ENCODE measurements at regions of chr16 and their contacts with region 1.

Region 1: DNA sequence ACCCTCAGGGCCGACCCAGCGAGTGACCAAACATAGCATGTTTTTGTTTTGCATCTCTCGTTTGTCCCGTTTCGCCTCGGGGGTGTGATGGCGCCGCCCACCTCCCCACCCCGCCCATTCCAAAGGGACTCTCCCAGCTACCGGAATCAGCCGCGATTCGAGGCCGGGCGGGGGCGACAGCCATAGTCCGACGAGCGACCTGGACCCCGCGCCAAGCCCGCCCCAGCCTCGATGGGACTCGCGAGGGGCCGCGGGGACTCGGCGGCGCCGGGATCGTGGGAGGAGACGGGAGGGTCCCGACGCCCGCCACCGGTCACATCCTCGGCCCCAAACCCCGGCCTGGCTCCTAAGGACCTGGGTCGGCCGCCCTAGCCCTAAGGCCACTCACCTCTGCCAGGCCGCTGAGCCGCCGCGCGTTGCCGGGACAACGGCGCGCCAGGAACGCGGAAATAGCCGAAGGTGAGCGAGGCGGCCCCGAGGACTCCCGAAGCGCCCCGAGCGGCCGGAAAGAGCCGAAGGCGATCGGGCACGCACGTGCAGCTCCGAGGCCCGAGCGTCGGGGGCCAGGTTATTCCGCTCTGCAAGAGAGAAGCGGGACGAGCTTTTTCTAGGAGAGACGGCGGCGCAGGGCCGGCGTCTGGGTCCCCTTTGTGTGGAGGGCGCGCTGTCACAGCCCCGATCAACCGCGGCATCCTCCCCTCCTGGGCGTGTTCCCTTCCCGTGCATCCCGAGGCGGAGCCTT is 1.4 kb downstream of the IFT140 start:
- DNase-seq: peak; percentile 76 to 81
- ATAC-seq: peak; percentile 61 to 67
- H3K4me3 ChIP-seq: peak overlapping the region; percentile 69 to 91 (median 80)
- H3K27ac ChIP-seq: peak overlapping the region; percentile 78 to 94 (median 86)
- H3K4me1 ChIP-seq: peaks cover 30 to 33% of the 10 kb centered on the region in 2 donors
- H3K27me3 ChIP-seq: no peaks in the 10 kb centered on the region
- CTCF ChIP-seq: no peak
- POLR2A ChIP-seq: no peak

Region 2: DNA sequence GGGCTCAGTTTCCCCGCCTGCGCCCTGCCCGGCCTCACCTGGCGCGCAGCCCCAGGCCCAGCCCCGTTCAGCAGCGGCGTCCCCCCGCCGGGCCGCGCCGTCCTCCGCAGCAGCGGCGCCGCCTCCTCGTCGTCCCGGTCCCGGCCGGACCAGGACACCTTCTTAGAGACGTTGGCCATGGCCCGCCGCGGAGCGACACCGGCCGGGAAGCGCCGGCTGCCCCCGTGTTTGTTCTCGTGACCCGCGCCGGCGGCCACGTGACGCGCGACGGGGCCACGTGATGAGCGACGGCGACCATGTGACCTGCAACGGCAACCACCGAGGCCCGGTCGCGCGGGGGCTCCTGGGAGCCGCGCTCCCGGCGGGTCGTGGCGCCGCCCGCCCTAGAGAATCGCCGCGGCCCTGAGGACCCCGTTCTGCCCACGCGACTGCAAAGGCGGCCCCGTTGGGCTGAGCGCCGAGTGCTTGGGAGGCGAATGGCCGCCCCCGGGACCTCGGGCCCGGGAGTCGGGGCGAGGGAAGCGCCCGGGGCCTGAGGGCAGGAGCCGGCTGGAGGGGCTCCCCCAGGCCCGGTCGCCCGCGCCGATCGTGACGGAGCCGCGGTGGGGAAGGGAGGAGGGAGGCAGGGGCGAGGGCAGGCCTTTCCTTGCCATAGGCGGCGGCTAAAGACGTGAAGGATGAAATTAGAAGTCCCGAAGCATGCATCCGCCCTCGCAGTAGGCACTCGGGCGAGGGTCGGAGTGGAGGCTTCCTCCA is 135.5 kb before region 1 on chr16 and contains the start of gene CLCN7:
- in situ Hi-C with region 1: no loop called
- intact Hi-C with region 1: loop called (anchors 5 kb)
- DNase-seq: peak; percentile 86 to 91
- ATAC-seq: peak; percentile 93 to 97
- H3K4me3 ChIP-seq: peak within 1 kb of the TSS; percentile 80 to 100 (median 86)
- H3K27ac ChIP-seq: peak within 1 kb of the TSS; percentile 90 to 98 (median 94)
- H3K4me1 ChIP-seq: peaks cover 14 to 27% of the 10 kb centered on the region in 2 donors
- H3K27me3 ChIP-seq: no peaks in the 10 kb centered on the region
- CTCF ChIP-seq: peak in 2 of 5 experiments; percentile 21 to 56
- POLR2A ChIP-seq: peak; percentile 95 to 97
- total RNA-seq, gene CLCN7: 24.8 to 45.8 (median 38.4) TPM

Region 3: GRCh38 chr16:1642148-1642547 is 31.7 kb after region 1 on chr16:
- in situ Hi-C with region 1: no loop called
- intact Hi-C with region 1: loop called (anchors 1 kb)
- DNase-seq: peak; percentile 83 to 92
- ATAC-seq: peak; percentile 78 to 90
- H3K4me3 ChIP-seq: no peak overlapping the region
- H3K27ac ChIP-seq: peak overlapping the region; percentile 68 to 82 (median 77)
- H3K4me1 ChIP-seq: peaks cover 32 to 39% of the 10 kb centered on the region in 2 donors
- H3K27me3 ChIP-seq: no peaks in the 10 kb centered on the region
- CTCF ChIP-seq: no peak
- POLR2A ChIP-seq: no peak

Region 4: DNA sequence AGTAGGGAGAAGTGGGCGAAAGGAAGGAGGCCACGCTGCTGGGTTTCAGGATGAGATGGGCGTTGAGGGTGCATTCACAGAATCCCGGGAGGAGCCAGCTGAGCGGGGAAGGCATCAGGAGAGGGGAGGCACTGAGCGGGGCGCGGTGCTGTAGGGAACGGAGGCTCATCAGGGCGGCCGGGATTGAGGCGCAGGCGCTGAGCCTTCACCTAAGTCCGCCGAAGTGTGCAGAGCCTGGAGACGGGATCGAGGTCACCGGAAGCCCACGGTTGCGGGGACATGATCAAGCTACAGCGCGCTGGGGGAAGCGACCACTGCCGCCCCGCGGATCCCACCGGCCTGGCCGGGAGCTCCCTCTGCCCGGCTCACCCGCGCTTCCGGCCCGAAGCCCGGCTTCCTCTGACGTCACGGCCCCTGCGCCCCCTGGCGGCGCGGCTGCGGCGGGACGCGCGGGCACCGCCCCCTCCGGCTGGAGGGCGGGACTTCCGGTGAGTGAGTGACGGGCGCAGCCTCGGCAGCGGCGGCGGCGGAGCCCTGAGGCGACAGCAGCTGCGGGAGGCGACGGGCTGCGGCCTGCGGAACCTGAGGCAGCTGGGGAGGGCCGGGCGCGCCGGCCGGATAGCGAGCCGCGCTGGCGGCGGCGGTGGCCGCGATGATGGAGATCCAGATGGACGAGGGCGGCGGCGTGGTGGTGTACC is 95.4 kb after region 1 on chr16 and contains the start of gene MAPK8IP3:
- in situ Hi-C with region 1: no loop called
- intact Hi-C with region 1: loop called (anchors 1 kb)
- DNase-seq: peak; percentile 75 to 88
- ATAC-seq: peak; percentile 86 to 91
- H3K4me3 ChIP-seq: peak within 1 kb of the TSS; percentile 85 to 96 (median 88)
- H3K27ac ChIP-seq: peak within 1 kb of the TSS; percentile 89 to 94 (median 92)
- H3K4me1 ChIP-seq: peaks cover 28 to 31% of the 10 kb centered on the region in 2 donors
- H3K27me3 ChIP-seq: no peaks in the 10 kb centered on the region
- CTCF ChIP-seq: peak; percentile 68 to 100 (median 100)
- POLR2A ChIP-seq: peak; percentile 97 to 99
- total RNA-seq, gene MAPK8IP3: 6.5 to 22.6 (median 13.9) TPM

Region 5: GRCh38 chr16:1983544-1984346 is 373.3 kb after region 1 on chr16 and contains the start of gene GFER:
- in situ Hi-C with region 1: no loop called
- intact Hi-C with region 1: loop called (anchors 10 kb)
- DNase-seq: peak; percentile 68 to 82
- ATAC-seq: peak; percentile 76 to 85
- H3K4me3 ChIP-seq: peak within 1 kb of the TSS; percentile 74 to 91 (median 86)
- H3K27ac ChIP-seq: peak within 1 kb of the TSS; percentile 68 to 83 (median 78)
- H3K4me1 ChIP-seq: peaks cover 16 to 25% of the 10 kb centered on the region in 2 donors
- H3K27me3 ChIP-seq: peaks cover 4 to 5% (median 5%) of the 10 kb centered on the region in 3 donors
- CTCF ChIP-seq: peak in 4 of 5 experiments; percentile 20 to 45 (median 35)
- POLR2A ChIP-seq: peak; percentile 29 to 54
- total RNA-seq, gene GFER: 16.3 to 27.0 (median 20.1) TPM